ENCODE measurements at regions of chr6 and their contacts with region 1.

Region 1: DNA sequence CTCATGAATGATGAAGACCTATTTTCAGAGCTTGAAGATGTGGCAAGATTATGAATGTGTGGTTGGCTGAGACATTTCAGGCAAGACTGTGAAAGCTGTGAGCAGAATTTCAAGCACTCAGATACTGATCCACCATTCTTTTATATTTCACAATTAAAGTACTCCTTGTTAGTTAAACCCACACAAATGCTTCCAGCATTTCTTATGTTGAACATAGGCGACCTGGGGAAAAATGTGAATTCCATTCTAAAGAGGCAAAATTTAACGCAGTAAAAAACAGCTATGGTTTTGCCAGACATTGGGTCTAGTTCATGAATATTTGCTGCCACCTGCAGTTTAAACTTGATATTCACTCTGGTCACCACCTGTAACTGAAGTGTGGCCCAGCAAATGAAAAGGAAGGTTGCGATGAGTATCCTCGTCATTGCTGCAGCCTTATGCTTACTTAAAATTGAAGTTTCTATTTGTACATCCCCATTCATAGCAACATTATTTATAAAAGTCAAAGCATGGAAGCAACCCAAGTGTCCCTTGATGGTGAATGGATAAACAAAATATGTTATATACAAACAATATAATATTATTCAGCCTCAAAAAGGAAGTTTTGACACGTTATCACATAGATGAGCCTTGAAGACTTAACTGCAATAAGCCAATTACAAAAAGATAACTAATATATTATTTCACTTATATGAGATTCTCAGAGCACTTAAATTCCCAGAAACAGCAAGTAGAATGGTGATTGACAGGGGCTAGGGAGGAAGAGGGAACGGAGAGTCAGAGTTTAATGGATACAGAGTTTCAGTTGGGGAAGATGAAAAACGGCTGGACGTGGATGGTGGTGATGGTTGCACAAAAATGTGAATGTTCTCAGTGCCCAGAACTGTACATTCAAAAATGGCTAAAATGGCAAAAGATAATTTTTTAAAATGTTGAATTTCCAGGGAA is 32.4 kb upstream of the FAM184A start:
- DNase-seq: peak; percentile 50
- H3K4me3 Mint-ChIP-seq: no peak overlapping the region
- H3K27ac Mint-ChIP-seq: no peak overlapping the region
- H3K4me1 Mint-ChIP-seq: peaks cover 12% of the 10 kb centered on the region
- H3K27me3 Mint-ChIP-seq: no peaks in the 10 kb centered on the region

Region 2: DNA sequence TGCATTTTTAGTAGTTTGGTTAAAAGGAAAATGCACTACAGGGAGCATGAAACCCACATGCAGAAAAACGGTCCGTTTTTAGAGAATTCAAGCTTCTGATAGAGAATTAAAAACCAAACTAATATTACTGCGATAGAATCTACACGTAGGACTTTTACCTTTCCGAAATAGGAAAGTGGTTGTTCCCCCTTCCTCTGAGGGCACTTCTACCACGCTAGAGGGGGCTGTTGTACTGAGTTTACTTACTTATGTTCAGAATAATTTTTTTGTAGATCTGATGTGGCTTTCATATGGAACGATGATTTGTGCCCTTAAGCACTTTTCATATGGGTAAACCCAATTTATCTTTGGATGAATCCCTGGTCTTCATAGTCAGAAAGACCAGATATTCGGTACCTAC is 827.1 kb before region 1 on chr6:
- CTCF ChIA-PET with region 1: interaction called, 14 read pairs
- DNase-seq: peak; percentile 64
- H3K4me3 Mint-ChIP-seq: no peak overlapping the region
- H3K27ac Mint-ChIP-seq: no peak overlapping the region
- H3K4me1 Mint-ChIP-seq: peaks cover 2% of the 10 kb centered on the region
- H3K27me3 Mint-ChIP-seq: peaks cover 6% of the 10 kb centered on the region

Region 3: DNA sequence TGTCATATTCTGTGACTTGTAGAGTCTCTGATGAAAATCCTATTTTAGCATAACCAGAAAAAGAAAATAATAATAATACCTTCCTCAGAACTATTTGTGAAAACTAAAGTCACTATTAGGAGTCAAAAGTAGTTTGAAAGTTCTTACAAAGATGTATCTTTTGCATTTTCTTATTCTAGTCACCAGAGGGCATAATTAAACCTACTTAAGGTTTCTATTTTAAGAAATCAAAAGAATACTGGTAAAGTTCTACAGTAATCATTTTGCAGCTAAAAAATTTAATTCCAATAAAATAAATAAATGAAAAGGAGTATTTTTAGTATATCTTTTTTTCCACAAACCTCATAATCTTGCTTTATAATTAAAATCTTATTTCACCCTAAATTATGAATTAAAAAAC is 147.9 kb before region 1 on chr6:
- CTCF ChIA-PET with region 1: interaction called, 62 read pairs
- DNase-seq: no peak
- H3K4me3 Mint-ChIP-seq: no peak overlapping the region
- H3K27ac Mint-ChIP-seq: no peak overlapping the region
- H3K4me1 Mint-ChIP-seq: peaks cover 13% of the 10 kb centered on the region
- H3K27me3 Mint-ChIP-seq: no peaks in the 10 kb centered on the region

Region 4: DNA sequence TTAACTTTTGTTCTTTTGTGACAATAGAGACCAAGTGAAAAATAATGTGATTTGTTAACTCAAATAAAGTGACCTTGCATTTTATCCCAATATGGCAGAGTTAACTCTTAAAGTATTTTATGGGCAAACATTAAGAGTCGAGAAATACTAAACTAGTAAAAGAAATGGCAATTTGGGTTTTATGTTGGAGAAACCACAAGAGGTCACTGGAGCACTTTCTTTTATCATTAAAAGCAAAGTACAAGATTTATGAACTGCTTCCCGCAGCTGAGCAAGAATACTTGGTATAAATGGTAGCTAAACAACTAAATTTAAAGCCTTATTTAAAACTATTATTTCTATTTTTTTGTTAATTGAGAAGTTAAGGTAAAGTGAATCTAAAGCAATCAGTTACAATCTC is 142.5 kb before region 1 on chr6:
- CTCF ChIA-PET with region 1: interaction called, 62 read pairs
- DNase-seq: no peak
- H3K4me3 Mint-ChIP-seq: no peak overlapping the region
- H3K27ac Mint-ChIP-seq: no peak overlapping the region
- H3K4me1 Mint-ChIP-seq: no peaks in the 10 kb centered on the region
- H3K27me3 Mint-ChIP-seq: no peaks in the 10 kb centered on the region

Region 5: DNA sequence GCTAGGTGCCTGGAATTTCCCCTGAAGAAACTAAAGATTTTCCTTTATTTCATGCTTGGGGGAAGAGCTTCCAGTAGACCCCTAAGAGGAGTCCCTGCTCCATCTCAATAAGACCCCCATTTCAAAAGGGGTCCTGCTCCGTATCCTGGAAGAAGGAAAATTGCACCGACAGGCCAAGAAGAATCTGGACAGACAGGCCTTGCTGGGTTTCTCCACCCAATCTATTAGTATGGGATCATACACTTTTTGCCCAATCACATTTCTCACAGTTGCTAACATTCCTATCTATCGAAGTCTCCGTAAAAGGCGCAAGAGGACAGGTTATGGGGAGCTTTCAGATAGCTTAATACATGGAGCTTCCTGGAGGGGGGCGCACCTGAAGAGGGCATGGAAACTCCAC is 11.5 kb before region 1 on chr6:
- CTCF ChIA-PET with region 1: interaction called, 14 read pairs
- DNase-seq: no peak
- H3K4me3 Mint-ChIP-seq: no peak overlapping the region
- H3K27ac Mint-ChIP-seq: no peak overlapping the region
- H3K4me1 Mint-ChIP-seq: peaks cover 11% of the 10 kb centered on the region
- H3K27me3 Mint-ChIP-seq: no peaks in the 10 kb centered on the region

Region 6: DNA sequence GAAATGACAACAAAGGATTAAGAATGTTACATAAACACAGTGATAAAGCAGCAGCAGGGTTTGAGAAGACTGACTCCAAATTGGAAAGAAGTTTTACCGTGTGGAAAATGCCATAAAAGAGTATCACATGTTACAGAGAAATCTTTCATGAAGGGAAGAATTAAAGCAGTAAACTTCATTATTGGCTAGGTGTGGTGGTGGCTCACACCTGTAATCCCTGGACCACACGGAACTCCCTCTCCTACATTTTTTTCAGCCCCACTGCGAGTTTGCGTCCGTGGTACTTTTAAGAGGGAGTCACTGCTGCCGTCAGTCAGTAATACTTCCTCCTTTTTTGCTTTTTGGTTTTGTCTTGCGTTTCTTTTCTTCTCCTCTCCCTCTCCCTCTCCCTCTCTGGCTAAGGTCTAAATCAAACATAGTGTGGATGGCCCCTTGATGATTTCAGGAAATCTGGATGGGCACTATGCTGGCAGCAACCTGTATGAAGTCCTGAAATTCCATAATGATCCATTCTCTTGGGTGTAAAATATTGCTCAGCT is 126.4 kb after region 1 on chr6:
- CTCF ChIA-PET with region 1: no interaction called
- DNase-seq: no peak
- H3K4me3 Mint-ChIP-seq: no peak overlapping the region
- H3K27ac Mint-ChIP-seq: no peak overlapping the region
- H3K4me1 Mint-ChIP-seq: no peaks in the 10 kb centered on the region
- H3K27me3 Mint-ChIP-seq: no peaks in the 10 kb centered on the region

Measured in activated naive CD4-positive, alpha-beta T cell treated with anti-CD3 and anti-CD28 coated beads, Interleukin-2, amount 10 ng/mL, durations not matched to agents 7 days and 5 days (primary cell).